ENCODE measurements at regions of chr14 and their contacts with region 1.

Region 1: DNA sequence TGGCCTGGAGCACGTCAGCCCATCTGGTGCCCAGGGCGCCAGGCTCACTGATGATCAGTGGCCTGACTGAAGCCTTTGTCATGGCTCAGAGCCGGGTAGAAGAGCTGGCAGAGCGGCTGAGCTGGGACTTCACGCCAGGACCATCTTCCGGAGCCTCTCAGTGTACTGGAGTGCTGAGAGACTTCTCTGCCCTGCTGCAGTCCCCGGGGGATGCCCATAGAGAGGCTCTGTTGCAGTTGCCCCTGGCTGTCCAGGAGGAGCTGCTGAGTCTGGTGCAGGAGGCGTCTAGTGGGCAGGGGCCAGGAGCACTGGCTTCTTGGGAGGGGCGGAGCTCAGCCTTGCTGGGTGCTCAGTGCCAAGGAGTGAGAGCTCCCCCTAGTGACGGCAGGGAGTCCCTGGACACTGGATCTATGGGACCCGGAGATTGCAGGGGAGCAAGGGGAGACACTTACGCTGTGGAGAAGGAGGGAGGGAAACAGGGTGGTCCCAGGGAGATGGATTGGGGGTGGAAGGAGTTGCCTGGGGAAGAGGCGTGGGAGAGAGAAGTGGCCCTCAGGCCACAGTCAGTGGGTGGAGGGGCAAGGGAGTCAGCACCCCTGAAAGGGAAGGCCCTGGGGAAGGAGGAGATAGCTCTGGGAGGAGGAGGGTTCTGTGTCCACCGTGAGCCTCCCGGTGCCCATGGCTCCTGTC is 2.0 kb downstream of the KHNYN start:
- DNase-seq: peak; percentile 76
- ATAC-seq: peak; percentile 79
- H3K4me3 ChIP-seq: peak overlapping the region; percentile 93
- H3K27ac ChIP-seq: peak overlapping the region; percentile 92
- H3K4me1 ChIP-seq: peaks cover 13% of the 10 kb centered on the region
- H3K27me3 ChIP-seq: no peaks in the 10 kb centered on the region
- CTCF ChIP-seq: peak; percentile 95 to 98 (median 98)
- EP300 ChIP-seq: 0 out of 4 replicates have a peak, but pooled peaks of 1 of the 2 experiments have one; percentile 10
- POLR2A ChIP-seq: peak; percentile 45
- RAD21 ChIP-seq: peak; percentile 91

Region 2: DNA sequence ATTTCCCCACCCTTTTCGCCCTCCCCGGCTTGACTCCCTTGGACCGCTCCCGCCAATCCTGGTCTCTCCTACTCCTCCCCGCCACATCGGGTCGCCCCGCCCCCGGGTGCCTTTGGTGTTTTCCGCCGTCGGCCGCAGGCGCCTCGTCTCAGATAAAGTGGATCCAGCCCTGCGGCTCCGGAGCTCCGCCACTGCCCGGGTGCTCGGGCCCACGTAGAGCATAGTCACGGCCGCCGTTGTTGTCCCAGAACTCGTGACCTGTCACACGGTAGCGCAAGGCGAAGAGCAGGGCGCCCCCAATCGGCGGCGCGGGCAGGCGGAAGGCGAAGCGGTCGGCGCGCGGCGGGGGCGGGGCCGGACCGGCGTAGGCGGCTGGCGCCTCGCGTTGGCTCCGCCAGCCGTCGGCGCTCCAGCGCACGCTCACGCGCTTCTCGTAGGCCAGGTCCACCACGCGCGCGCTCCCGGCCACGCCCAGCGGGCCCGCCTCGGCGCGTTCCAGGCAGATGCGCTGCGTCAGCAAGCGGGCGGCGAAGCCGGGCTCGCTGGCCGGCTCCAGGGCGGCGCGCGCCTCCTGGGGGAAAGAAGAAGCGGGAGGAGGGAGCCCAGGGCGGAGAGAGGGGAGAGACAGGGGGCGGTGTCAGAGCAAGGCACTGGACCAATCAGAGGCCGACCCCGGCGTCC is 1130.3 kb before region 1 on chr14:
- CTCF ChIA-PET with region 1: no interaction called
- POLR2A ChIA-PET with region 1: no interaction called
- RAD21 ChIA-PET with region 1: no interaction called
- SMC1A ChIA-PET with region 1: no interaction called
- in situ Hi-C with region 1: loop called (anchors 10 kb)
- intact Hi-C with region 1: no loop called
- DNase-seq: peak; percentile 91
- ATAC-seq: peak; percentile 90
- H3K4me3 ChIP-seq: peak overlapping the region; percentile 73
- H3K27ac ChIP-seq: peak overlapping the region; percentile 85
- H3K4me1 ChIP-seq: peaks cover 11% of the 10 kb centered on the region
- H3K27me3 ChIP-seq: no peaks in the 10 kb centered on the region
- CTCF ChIP-seq: peak; percentile 72 to 88 (median 73)
- EP300 ChIP-seq: peak; percentile 39; a peak in 1 of 4 replicates
- POLR2A ChIP-seq: peak; percentile 78
- RAD21 ChIP-seq: peak; percentile 43; the same call in 1 of the 2 replicates

Region 3: DNA sequence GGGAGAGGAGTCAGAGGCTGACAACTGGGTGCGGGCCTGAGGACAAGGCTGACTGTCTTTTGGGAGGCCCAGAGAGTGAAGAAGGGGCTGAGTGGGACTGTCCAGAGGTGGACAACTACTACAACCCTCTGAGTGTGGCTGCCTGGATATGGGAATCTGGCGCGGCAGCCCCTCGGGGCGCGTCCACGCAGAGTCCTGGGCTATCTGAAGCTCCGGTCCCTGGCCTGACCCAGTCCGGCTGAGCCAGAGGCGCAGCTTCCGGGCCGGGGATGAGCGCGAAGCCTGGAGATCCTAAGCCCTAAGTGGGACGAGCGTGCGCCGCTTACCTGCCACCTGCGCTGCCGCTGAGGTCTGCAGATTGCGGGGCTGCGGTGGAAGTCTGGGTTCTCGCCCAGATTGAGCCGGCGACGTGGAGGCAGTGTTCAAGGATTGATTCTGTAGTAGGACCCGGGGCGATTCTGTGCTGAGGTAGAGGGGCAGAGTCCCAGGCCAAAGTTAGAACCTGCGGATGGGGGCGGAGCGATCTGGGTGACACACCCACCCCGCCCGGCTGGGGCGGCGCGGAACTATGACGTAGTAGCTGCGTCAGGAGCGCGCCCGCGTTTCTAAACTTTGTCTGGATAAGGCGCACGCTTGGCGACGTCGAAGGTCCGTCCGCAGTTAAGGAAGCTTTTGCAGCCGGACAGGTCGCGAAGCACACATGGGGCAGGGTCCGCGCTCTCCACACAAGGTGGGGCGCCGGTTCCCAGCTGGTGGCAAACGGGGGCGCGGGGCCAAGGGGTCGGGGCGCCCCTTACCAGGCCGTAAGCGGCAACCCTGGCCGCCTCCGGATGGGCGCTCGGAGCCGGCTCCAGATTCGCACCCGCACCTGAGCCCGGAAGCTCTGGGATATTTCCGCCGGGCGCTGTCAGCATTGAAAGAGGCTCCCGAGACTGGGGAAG is 132.2 kb before region 1 on chr14 and contains the starts of genes DHRS1 and NOP9:
- CTCF ChIA-PET with region 1: interaction called, 10 read pairs
- POLR2A ChIA-PET with region 1: interaction called, 4 read pairs
- RAD21 ChIA-PET with region 1: interaction called, 8 read pairs
- SMC1A ChIA-PET with region 1: interaction called, 10 read pairs
- in situ Hi-C with region 1: no loop called
- intact Hi-C with region 1: no loop called
- DNase-seq: peak; percentile 65
- ATAC-seq: peak; percentile 79
- H3K4me3 ChIP-seq: peak within 1 kb of the TSS; percentile 96
- H3K27ac ChIP-seq: peak within 1 kb of the TSS; percentile 51
- H3K4me1 ChIP-seq: peaks cover 25% of the 10 kb centered on the region
- H3K27me3 ChIP-seq: no peaks in the 10 kb centered on the region
- CTCF ChIP-seq: no peak
- EP300 ChIP-seq: no peak
- POLR2A ChIP-seq: peak; percentile 85
- RAD21 ChIP-seq: no peak
- polyA plus RNA-seq, gene DHRS1: 44.6 to 45.0 TPM
- polyA plus RNA-seq, gene NOP9: 2.4 to 3.4 TPM

Region 4: DNA sequence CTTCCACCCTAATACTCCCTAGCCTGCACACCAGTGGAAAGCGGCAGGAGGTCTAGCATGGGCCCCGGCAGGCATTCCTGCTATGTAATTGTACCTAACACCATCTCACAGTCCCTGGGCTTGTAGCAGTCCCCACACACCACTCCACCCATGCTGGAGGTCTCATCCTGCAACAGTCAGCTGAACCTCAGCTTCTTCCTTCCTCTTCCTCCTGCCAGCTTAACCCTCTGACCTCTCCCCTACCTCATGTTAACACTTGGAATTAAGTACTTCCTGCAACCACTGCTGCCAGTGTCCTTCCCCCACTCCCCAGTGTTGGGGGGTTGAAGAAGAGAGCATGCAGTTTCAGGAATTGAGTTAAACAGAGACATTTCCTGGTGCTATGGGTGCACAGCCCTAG is 104.4 kb before region 1 on chr14:
- CTCF ChIA-PET with region 1: interaction called, 452 read pairs
- POLR2A ChIA-PET with region 1: interaction called, 42 read pairs
- RAD21 ChIA-PET with region 1: interaction called, 141 read pairs
- SMC1A ChIA-PET with region 1: interaction called, 77 read pairs
- in situ Hi-C with region 1: loop called (anchors 5 kb)
- intact Hi-C with region 1: loop called (anchors 1 kb)
- DNase-seq: no peak
- ATAC-seq: no peak
- H3K4me3 ChIP-seq: no peak overlapping the region
- H3K27ac ChIP-seq: no peak overlapping the region
- H3K4me1 ChIP-seq: peaks cover 1% of the 10 kb centered on the region
- H3K27me3 ChIP-seq: no peaks in the 10 kb centered on the region
- CTCF ChIP-seq: no peak
- EP300 ChIP-seq: no peak
- POLR2A ChIP-seq: no peak
- RAD21 ChIP-seq: no peak

Region 5: DNA sequence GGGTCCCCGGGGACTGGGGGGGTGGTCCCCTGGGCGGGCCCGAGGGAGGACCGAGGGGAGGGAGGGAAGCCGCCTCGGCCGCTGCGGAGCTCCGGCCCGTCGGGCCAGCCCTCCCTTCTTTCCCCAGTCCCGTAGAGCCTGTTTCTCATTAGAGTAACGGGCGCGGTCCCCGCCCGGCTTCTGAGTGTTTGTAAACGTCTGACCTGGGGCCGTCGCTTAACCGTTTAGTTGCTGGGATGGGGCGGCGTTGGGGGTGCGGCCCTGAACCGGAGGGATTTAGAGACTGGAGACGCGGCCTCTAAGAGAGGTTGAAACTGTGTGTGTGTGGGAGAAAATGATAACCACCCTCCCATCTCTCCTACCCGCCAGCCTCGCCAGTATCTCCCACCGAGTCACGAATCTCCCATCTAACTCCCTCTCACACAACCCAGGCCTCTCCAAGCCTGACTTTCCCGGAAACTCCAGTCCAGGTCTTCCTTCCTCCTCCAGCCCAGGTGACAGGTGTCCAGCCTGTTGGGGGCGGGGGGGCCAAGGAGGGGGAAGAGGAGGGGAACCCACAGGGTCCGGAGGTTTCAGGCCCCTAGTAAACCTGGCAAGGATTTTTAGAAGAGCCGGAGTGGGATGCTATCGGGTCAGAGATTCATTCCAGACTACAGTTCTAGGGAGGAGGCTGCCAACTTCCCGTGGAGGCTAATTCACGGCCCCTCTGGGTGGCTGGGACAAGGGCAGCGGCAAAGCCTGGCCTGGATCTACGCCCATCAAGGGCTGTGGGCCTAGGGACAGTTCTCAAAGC is 64.8 kb before region 1 on chr14:
- CTCF ChIA-PET with region 1: interaction called, 163 read pairs
- POLR2A ChIA-PET with region 1: interaction called, 61 read pairs
- RAD21 ChIA-PET with region 1: interaction called, 122 read pairs
- SMC1A ChIA-PET with region 1: interaction called, 79 read pairs
- in situ Hi-C with region 1: loop called (anchors 5 kb)
- intact Hi-C with region 1: loop called (anchors 1 kb)
- DNase-seq: peak; percentile 34
- ATAC-seq: peak; percentile 79
- H3K4me3 ChIP-seq: peak overlapping the region; percentile 53; the same call in 1 of the 2 replicates
- H3K27ac ChIP-seq: peak overlapping the region; percentile 48
- H3K4me1 ChIP-seq: peaks cover 16% of the 10 kb centered on the region
- H3K27me3 ChIP-seq: peaks cover 1 to 6% of the 10 kb centered on the region in 2 experiments
- CTCF ChIP-seq: no peak
- EP300 ChIP-seq: peak; percentile 29 to 31; a peak in 1 of 4 replicates
- POLR2A ChIP-seq: no peak
- RAD21 ChIP-seq: no peak

Region 6: GRCh38 chr14:24411443-24412389 is 20.0 kb before region 1 on chr14:
- CTCF ChIA-PET with region 1: interaction called, 19 read pairs
- POLR2A ChIA-PET with region 1: interaction called, 3 read pairs
- RAD21 ChIA-PET with region 1: interaction called, 9 read pairs
- SMC1A ChIA-PET with region 1: interaction called, 14 read pairs
- in situ Hi-C with region 1: no loop called
- intact Hi-C with region 1: no loop called
- DNase-seq: no peak
- ATAC-seq: peak; percentile 87
- H3K4me3 ChIP-seq: no peak overlapping the region
- H3K27ac ChIP-seq: no peak overlapping the region
- H3K4me1 ChIP-seq: no peaks in the 10 kb centered on the region
- H3K27me3 ChIP-seq: peaks cover 1 to 5% of the 10 kb centered on the region in 2 experiments; a peak in 2 of 4 replicates
- CTCF ChIP-seq: peak; percentile 54 to 79 (median 58)
- EP300 ChIP-seq: no peak
- POLR2A ChIP-seq: no peak
- RAD21 ChIP-seq: peak; percentile 62

Region 7: GRCh38 chr14:24565766-24566165 is 134.1 kb after region 1 on chr14:
- CTCF ChIA-PET with region 1: no interaction called
- POLR2A ChIA-PET with region 1: no interaction called
- RAD21 ChIA-PET with region 1: no interaction called
- SMC1A ChIA-PET with region 1: no interaction called
- in situ Hi-C with region 1: no loop called
- intact Hi-C with region 1: no loop called
- DNase-seq: no peak
- ATAC-seq: no peak
- H3K4me3 ChIP-seq: no peak overlapping the region
- H3K27ac ChIP-seq: no peak overlapping the region
- H3K4me1 ChIP-seq: no peaks in the 10 kb centered on the region
- H3K27me3 ChIP-seq: no peaks in the 10 kb centered on the region
- CTCF ChIP-seq: no peak
- EP300 ChIP-seq: no peak
- POLR2A ChIP-seq: no peak
- RAD21 ChIP-seq: no peak

Region 8: GRCh38 chr14:25308244-25308643 is 876.5 kb after region 1 on chr14:
- CTCF ChIA-PET with region 1: no interaction called
- POLR2A ChIA-PET with region 1: no interaction called
- RAD21 ChIA-PET with region 1: no interaction called
- SMC1A ChIA-PET with region 1: no interaction called
- in situ Hi-C with region 1: no loop called
- intact Hi-C with region 1: no loop called
- DNase-seq: no peak
- ATAC-seq: no peak
- H3K4me3 ChIP-seq: no peak overlapping the region
- H3K27ac ChIP-seq: no peak overlapping the region
- H3K4me1 ChIP-seq: no peaks in the 10 kb centered on the region
- H3K27me3 ChIP-seq: no peaks in the 10 kb centered on the region
- CTCF ChIP-seq: no peak
- EP300 ChIP-seq: no peak
- POLR2A ChIP-seq: no peak
- RAD21 ChIP-seq: no peak

Measured in GM12878 (cell line).